Naive thymus-derived CD4-positive, alpha-beta T cell (primary cell): ENCODE measurements at regions of chr10 and their contacts with region 1.

Region 1: DNA sequence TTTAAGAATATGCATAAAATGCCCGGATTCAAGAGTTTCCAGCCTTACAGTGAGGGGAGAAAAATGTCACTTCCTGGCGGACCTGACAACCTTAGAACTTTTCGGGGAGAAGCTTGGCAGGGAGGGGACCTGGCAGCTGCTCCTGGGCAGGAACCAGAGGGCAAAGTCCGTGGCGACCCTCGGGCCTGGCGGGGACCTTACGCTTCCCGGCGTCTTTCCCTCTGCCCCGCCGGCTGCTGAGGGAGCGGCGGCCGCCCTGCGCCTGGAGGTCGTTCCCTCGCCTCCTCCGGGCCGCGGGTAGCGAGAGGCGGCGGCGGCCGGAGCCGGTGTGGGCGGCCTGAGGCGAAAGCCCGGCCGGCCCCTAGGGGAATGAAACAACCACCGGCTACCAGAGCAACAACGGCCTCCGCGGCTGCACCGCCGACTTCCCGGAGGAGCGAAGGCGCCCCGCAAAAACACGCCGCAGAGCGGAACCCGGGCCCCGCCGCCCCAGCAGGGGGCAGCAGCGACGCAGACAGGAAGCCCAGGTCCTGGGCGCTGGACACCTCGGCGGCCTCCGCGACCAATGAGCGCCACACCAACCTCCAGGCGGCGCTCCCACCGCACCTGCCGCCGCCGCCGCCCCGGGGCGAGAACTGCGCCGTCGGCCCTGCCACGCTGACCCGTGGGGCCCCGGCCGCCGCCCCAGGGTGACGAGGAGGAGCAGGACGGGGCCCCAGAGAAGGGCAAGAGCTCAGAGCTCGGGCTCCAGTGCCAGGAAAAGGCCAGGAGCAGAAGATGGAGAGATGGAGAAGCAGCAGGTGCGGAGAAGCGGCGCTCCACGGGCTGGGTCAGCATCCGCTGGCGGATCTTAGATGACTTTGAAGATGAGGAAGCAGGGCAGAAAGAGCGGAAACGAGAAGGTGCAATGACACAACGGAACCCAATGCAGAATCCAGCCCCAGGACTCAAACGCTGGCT is 10.5 kb upstream of the ACSM6 start:
- DNase-seq: peak; percentile 10 to 88 (median 55)
- ATAC-seq: peak; percentile 95
- H3K4me3 ChIP-seq: peak overlapping the region; percentile 55
- H3K4me3 Mint-ChIP-seq: peak overlapping the region; percentile 72 to 82 (median 78)
- H3K27ac ChIP-seq: no peak overlapping the region
- H3K27ac Mint-ChIP-seq: peak overlapping the region in 2 of 9 donors; percentile 29 to 42
- H3K4me1 ChIP-seq: no peaks in the 10 kb centered on the region
- H3K4me1 Mint-ChIP-seq: peaks cover 5 to 10% (median 6%) of the 10 kb centered on the region in 7 donors
- H3K27me3 ChIP-seq: no peaks in the 10 kb centered on the region
- H3K27me3 Mint-ChIP-seq: peaks cover 0 to 49% (median 24%) of the 10 kb centered on the region in 5 donors

Region 2: GRCh38 chr10:94545391-94546048 is 638.0 kb before region 1 on chr10 and contains the start of gene HELLS:
- CTCF ChIA-PET with region 1: no interaction called
- POLR2A ChIA-PET with region 1: no interaction called
- intact Hi-C with region 1: loop called in 1 of 2 experiments (anchors 5 kb)
- DNase-seq: peak; percentile 30 to 76 (median 63)
- ATAC-seq: peak; percentile 75
- H3K4me3 ChIP-seq: peak within 1 kb of the TSS; percentile 71
- H3K4me3 Mint-ChIP-seq: peak within 1 kb of the TSS; percentile 89 to 97 (median 94)
- H3K27ac ChIP-seq: peak within 1 kb of the TSS; percentile 63
- H3K27ac Mint-ChIP-seq: peak within 1 kb of the TSS; percentile 75 to 97 (median 87)
- H3K4me1 ChIP-seq: peaks cover 3 to 8% of the 10 kb centered on the region in 2 donors
- H3K4me1 Mint-ChIP-seq: peaks cover 15 to 32% (median 26%) of the 10 kb centered on the region in 7 donors
- H3K27me3 ChIP-seq: no peaks in the 10 kb centered on the region
- H3K27me3 Mint-ChIP-seq: peaks cover 0 to 28% (median 10%) of the 10 kb centered on the region in 5 donors
- total RNA-seq, gene HELLS: 5.4 to 107 (median 7.4) TPM

Region 3: DNA sequence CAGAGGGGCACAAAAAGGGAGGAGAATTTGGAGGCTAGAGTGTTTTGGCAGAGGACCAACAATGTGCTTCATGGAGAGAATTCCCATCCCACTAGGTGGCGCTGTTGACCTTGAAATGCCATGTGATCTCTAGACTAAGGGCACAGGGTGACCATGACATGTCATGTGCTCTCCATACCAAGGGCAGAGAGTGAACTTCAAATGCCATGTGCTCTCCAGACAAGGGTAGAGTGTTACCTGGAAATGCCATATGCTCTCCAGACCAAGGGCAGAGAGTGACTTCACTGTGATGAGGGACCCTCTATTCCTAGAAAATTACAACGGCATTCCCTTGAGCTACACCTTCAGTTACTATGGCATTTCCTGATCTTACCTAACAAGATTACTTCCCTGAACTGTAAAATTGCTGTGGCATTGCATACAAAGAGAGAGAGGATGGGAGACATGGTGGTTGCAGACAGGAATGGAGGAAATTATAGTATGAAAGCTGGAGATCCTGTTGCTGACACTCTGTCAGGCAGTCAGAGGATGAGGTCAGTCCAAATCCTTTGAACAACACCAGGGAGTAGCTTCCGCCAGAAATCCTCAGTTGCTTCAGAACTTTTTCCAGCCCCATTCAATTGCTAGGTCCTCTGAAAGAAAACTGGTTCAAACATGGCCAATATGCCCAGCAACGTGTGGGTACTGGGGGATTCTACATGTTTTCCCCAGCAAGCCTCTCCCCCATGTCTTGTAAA is 50.4 kb before region 1 on chr10:
- CTCF ChIA-PET with region 1: no interaction called
- POLR2A ChIA-PET with region 1: no interaction called
- intact Hi-C with region 1: loop called in 1 of 2 experiments (anchors 5 kb)
- DNase-seq: peak in 8 of 9 donors; percentile 22 to 74 (median 48)
- ATAC-seq: peak; percentile 67
- H3K4me3 ChIP-seq: no peak overlapping the region
- H3K4me3 Mint-ChIP-seq: no peak overlapping the region
- H3K27ac ChIP-seq: no peak overlapping the region
- H3K27ac Mint-ChIP-seq: no peak overlapping the region
- H3K4me1 ChIP-seq: no peaks in the 10 kb centered on the region
- H3K4me1 Mint-ChIP-seq: no peaks in the 10 kb centered on the region
- H3K27me3 ChIP-seq: no peaks in the 10 kb centered on the region
- H3K27me3 Mint-ChIP-seq: peaks cover 0 to 9% (median 0%) of the 10 kb centered on the region in 5 donors

Region 4: DNA sequence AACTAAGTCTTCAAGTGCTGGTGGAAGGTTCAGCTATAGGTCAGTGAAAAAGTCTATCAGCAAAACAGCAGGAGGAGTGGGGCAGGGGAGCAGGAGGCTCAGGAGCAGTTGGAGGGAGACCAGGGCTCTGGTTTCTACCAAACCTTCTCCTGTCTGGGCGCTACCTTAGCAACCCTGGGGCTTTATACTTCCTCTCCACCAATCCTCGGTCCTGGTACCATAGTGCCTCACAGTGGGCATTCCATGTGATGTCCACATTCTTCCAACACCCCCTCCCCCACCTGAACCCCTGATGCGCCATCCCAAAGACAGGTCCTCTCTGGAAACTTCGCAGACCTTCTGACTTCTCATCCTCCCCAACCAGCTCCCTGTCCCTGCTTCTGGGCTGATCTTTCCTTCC is 14.9 kb before region 1 on chr10:
- CTCF ChIA-PET with region 1: no interaction called
- POLR2A ChIA-PET with region 1: no interaction called
- intact Hi-C with region 1: no loop called
- DNase-seq: no peak
- ATAC-seq: no peak
- H3K4me3 ChIP-seq: no peak overlapping the region
- H3K4me3 Mint-ChIP-seq: no peak overlapping the region
- H3K27ac ChIP-seq: no peak overlapping the region
- H3K27ac Mint-ChIP-seq: no peak overlapping the region
- H3K4me1 ChIP-seq: no peaks in the 10 kb centered on the region
- H3K4me1 Mint-ChIP-seq: no peaks in the 10 kb centered on the region
- H3K27me3 ChIP-seq: no peaks in the 10 kb centered on the region
- H3K27me3 Mint-ChIP-seq: peaks cover 0 to 4% (median 0%) of the 10 kb centered on the region in 5 donors

Region 5: DNA sequence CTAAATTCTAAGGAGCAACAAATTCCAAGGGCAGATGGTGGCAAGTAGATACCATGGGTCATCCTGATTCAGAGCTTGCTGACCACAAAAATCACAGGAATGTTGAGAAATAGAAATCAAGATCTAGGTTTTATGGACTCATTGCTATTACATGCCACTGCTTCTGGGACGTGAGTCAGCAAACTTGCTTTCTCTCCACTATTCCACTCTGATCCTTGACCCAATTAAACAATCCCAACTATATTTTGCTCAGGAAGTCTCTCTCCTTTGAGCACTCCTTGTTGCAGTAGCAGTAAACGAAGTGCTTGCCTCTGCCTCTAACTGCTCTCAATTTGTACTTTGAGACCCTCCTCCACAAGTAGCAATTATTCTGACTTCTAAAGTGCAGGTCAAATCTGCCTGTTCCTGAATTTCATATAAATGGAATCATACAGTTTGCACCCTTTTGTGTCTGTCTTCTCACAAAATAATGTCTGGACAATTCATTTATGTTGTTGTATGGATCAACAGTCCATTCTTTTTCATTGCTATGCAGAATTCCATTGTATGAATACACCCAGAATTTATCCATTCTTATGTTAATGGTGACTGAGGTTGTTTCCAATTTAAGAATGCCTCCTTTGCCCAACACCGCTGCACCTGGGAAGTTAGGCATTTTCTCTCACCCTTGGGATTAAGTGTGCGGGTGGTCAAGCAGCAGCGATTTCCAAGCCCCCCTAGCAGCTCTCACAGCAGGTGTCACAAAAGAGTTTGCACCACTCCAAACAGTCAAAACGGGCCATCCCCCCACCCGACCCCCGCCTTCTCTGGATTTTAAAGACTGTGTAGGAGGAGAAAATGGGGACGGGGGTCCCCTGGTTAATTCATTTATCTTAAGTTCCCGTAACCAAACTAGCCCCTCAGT is 46.4 kb after region 1 on chr10:
- CTCF ChIA-PET with region 1: no interaction called
- POLR2A ChIA-PET with region 1: no interaction called
- intact Hi-C with region 1: loop called in 1 of 2 experiments (anchors 2 kb)
- DNase-seq: no peak
- ATAC-seq: no peak
- H3K4me3 ChIP-seq: peak overlapping the region; percentile 58
- H3K4me3 Mint-ChIP-seq: peak overlapping the region in 9 of 10 donors; percentile 65 to 92 (median 88)
- H3K27ac ChIP-seq: no peak overlapping the region
- H3K27ac Mint-ChIP-seq: peak overlapping the region in 4 of 9 donors; percentile 22 to 86 (median 72)
- H3K4me1 ChIP-seq: no peaks in the 10 kb centered on the region
- H3K4me1 Mint-ChIP-seq: peaks cover 0 to 15% (median 10%) of the 10 kb centered on the region in 7 donors
- H3K27me3 ChIP-seq: no peaks in the 10 kb centered on the region
- H3K27me3 Mint-ChIP-seq: peaks cover 0 to 8% (median 5%) of the 10 kb centered on the region in 5 donors

Region 6: GRCh38 chr10:95246579-95247051 is 63.1 kb after region 1 on chr10:
- CTCF ChIA-PET with region 1: interaction called, 5 read pairs
- POLR2A ChIA-PET with region 1: no interaction called
- intact Hi-C with region 1: loop called (anchors 1 kb)
- DNase-seq: peak in 7 of 9 donors; percentile 25 to 65 (median 43)
- ATAC-seq: peak; percentile 72
- H3K4me3 ChIP-seq: no peak overlapping the region
- H3K4me3 Mint-ChIP-seq: no peak overlapping the region
- H3K27ac ChIP-seq: no peak overlapping the region
- H3K27ac Mint-ChIP-seq: no peak overlapping the region
- H3K4me1 ChIP-seq: no peaks in the 10 kb centered on the region
- H3K4me1 Mint-ChIP-seq: peaks cover 0 to 38% (median 0%) of the 10 kb centered on the region in 7 donors
- H3K27me3 ChIP-seq: no peaks in the 10 kb centered on the region
- H3K27me3 Mint-ChIP-seq: peaks cover 2 to 28% (median 14%) of the 10 kb centered on the region in 5 donors

Region 7: GRCh38 chr10:95290461-95291364 is 107.2 kb after region 1 on chr10 and contains the start of gene PDLIM1:
- CTCF ChIA-PET with region 1: no interaction called
- POLR2A ChIA-PET with region 1: no interaction called
- intact Hi-C with region 1: loop called in 1 of 2 experiments (anchors 5 kb)
- DNase-seq: peak in 4 of 9 donors; percentile 16 to 57 (median 23)
- ATAC-seq: peak; percentile 82
- H3K4me3 ChIP-seq: peak within 1 kb of the TSS; percentile 43
- H3K4me3 Mint-ChIP-seq: peak within 1 kb of the TSS; percentile 71 to 88 (median 78)
- H3K27ac ChIP-seq: no peak within 1 kb of the TSS
- H3K27ac Mint-ChIP-seq: peak within 1 kb of the TSS in 2 of 9 donors; percentile 64 to 82
- H3K4me1 ChIP-seq: peaks cover 6 to 8% of the 10 kb centered on the region in 2 donors
- H3K4me1 Mint-ChIP-seq: peaks cover 11 to 51% (median 23%) of the 10 kb centered on the region in 7 donors
- H3K27me3 ChIP-seq: peaks cover 0 to 9% of the 10 kb centered on the region in 2 donors
- H3K27me3 Mint-ChIP-seq: peaks cover 39 to 59% (median 52%) of the 10 kb centered on the region in 5 donors
- total RNA-seq, gene PDLIM1: 0.32 to 27.6 (median 0.61) TPM

Region 8: GRCh38 chr10:95363303-95363912 is 179.9 kb after region 1 on chr10:
- CTCF ChIA-PET with region 1: no interaction called
- POLR2A ChIA-PET with region 1: no interaction called
- intact Hi-C with region 1: loop called (anchors 1 to 2 kb)
- DNase-seq: peak in 8 of 9 donors; percentile 6 to 59 (median 48)
- ATAC-seq: peak; percentile 75
- H3K4me3 ChIP-seq: no peak overlapping the region
- H3K4me3 Mint-ChIP-seq: no peak overlapping the region
- H3K27ac ChIP-seq: no peak overlapping the region
- H3K27ac Mint-ChIP-seq: no peak overlapping the region
- H3K4me1 ChIP-seq: no peaks in the 10 kb centered on the region
- H3K4me1 Mint-ChIP-seq: no peaks in the 10 kb centered on the region
- H3K27me3 ChIP-seq: no peaks in the 10 kb centered on the region
- H3K27me3 Mint-ChIP-seq: peaks cover 4 to 18% (median 5%) of the 10 kb centered on the region in 5 donors